Activated T-helper 1 cell treated with anti-CD3 and anti-CD28 coated beads, Interleukin-12 subunit alpha, Interleukin-12 subunit beta, Interleukin-2, Interleukin-4 antibody, amounts not matched to agents 30 ng/mL and 10 ng/mL and 1 ng/mL, durations not matched to agents 14 hours and 24 hours and 36 hours (primary cell): ENCODE measurements at regions of chr7 and their contacts with region 1.

Region 1: GRCh38 chr7:24665564-24666294 is 91.5 kb downstream of the GSDME start:
- DNase-seq: peak; percentile 14
- H3K4me3 Mint-ChIP-seq: no peak overlapping the region
- H3K27ac Mint-ChIP-seq: no peak overlapping the region
- H3K4me1 Mint-ChIP-seq: no peaks in the 10 kb centered on the region
- H3K27me3 Mint-ChIP-seq: no peaks in the 10 kb centered on the region

Region 2: GRCh38 chr7:23570592-23571200 is 1095.0 kb before region 1 on chr7:
- intact Hi-C with region 1: loop called (anchors 1 kb)
- DNase-seq: peak; percentile 48
- H3K4me3 Mint-ChIP-seq: no peak overlapping the region
- H3K27ac Mint-ChIP-seq: no peak overlapping the region
- H3K4me1 Mint-ChIP-seq: peaks cover 5% of the 10 kb centered on the region
- H3K27me3 Mint-ChIP-seq: peaks cover 6% of the 10 kb centered on the region

Region 3: GRCh38 chr7:23863209-23863798 is 802.4 kb before region 1 on chr7:
- intact Hi-C with region 1: loop called (anchors 1 kb)
- DNase-seq: no peak
- H3K4me3 Mint-ChIP-seq: no peak overlapping the region
- H3K27ac Mint-ChIP-seq: no peak overlapping the region
- H3K4me1 Mint-ChIP-seq: no peaks in the 10 kb centered on the region
- H3K27me3 Mint-ChIP-seq: peaks cover 9% of the 10 kb centered on the region

Region 4: GRCh38 chr7:24401628-24402593 is 263.8 kb before region 1 on chr7:
- intact Hi-C with region 1: loop called (anchors 1 kb)
- DNase-seq: no peak
- H3K4me3 Mint-ChIP-seq: no peak overlapping the region
- H3K27ac Mint-ChIP-seq: no peak overlapping the region
- H3K4me1 Mint-ChIP-seq: no peaks in the 10 kb centered on the region
- H3K27me3 Mint-ChIP-seq: peaks cover 1% of the 10 kb centered on the region

Region 5: GRCh38 chr7:24572997-24573625 is 92.6 kb before region 1 on chr7 and contains the start of gene PALS2:
- intact Hi-C with region 1: loop called (anchors 1 kb)
- DNase-seq: peak; percentile 77
- H3K4me3 Mint-ChIP-seq: peak within 1 kb of the TSS; percentile 94
- H3K27ac Mint-ChIP-seq: peak within 1 kb of the TSS; percentile 84
- H3K4me1 Mint-ChIP-seq: peaks cover 29% of the 10 kb centered on the region
- H3K27me3 Mint-ChIP-seq: peaks cover 41% of the 10 kb centered on the region
- total RNA-seq, gene PALS2: 34.9 and 42.2 TPM in 2 replicates